Heart right ventricle (tissue), 16 donors: ENCODE measurements at regions of chr18 and their contacts with region 1.

Region 1: GRCh38 chr18:2961821-2962220 is 51.1 kb downstream of the LPIN2 start:
- DNase-seq: no peak
- ATAC-seq: peak; percentile 31 to 77 (median 68)
- H3K4me3 ChIP-seq: no peak overlapping the region
- H3K27ac ChIP-seq: peak overlapping the region in 8 of 10 donors; percentile 14 to 88 (median 52)
- H3K4me1 ChIP-seq: peaks cover 5 to 74% (median 33%) of the 10 kb centered on the region in 9 donors
- H3K27me3 ChIP-seq: no peaks in the 10 kb centered on the region
- CTCF ChIP-seq: no peak

Region 2: DNA sequence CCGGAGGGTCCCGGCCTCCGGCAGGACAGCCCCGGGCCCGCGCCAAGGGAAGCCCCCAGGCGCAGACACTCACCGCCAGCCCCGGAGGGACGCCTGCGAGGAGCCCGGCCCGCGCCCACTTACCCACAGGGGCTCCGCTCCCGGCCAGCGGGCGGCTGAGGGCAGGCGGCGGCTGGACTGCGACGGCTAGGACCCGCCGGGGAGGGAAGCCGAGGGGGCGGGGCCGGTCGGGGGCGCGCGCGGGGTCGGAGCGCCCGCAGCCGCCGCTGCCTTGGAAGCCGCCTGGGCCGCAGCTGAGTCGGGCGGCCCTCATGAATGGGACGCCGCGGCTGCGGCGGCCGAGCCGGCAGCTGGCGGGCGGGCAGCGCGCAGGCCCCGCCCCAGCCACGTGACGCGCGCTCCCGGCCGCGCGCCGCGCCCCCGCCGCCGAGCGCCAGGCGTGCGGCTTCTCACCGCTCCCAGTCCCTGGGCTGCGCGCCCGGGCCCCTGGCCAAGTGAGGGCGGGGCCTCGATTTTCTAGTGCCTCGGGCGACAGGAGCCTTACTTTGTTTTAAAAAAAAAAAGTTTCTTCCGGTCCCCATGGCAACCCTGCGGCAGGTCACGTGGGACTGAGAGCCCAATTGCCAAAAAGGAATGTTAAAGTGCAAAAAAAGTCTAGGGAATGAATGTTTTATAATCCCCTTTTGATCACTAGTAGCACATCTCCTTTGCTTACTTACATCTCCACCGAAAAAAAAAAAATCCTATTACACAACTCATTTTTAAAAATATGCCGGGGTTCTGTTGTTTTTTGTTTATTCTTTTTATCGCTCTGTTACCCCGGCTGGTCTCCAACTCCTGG is 51.4 kb after region 1 on chr18 and contains the start of gene LPIN2:
- intact Hi-C with region 1: loop called in 1 of 10 experiments (anchors 5 kb)
- DNase-seq: peak; percentile 99 to 100
- ATAC-seq: peak; percentile 91 to 94 (median 92)
- H3K4me3 ChIP-seq: peak within 1 kb of the TSS; percentile 50 to 92 (median 88)
- H3K27ac ChIP-seq: peak within 1 kb of the TSS; percentile 57 to 99 (median 95)
- H3K4me1 ChIP-seq: peaks cover 3 to 84% (median 39%) of the 10 kb centered on the region in 9 donors
- H3K27me3 ChIP-seq: no peaks in the 10 kb centered on the region
- CTCF ChIP-seq: no peak
- total RNA-seq, gene LPIN2: 6.8 to 15.9 (median 8.2) TPM

Region 3: DNA sequence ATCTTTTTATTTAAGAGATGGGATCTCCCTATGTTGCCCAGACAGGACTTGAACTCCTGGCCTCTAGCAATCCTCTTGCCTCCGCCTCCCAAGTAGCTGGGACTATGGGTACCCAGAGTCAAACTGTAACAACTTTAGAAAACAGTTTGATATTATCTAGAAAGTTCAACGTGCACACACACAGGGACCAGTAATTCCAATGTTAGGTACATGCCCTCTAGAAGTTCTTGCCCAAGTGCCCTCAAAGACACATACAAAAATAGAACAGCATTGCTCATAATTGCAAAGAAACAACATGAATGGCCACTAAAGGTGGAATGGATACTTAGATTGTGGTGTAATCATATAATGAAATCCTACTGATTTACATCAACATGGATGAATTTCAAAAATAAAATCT is 63.7 kb after region 1 on chr18:
- intact Hi-C with region 1: no loop called
- DNase-seq: no peak
- ATAC-seq: peak in 1 of 8 donors; percentile 55
- H3K4me3 ChIP-seq: no peak overlapping the region
- H3K27ac ChIP-seq: peak overlapping the region in 1 of 10 donors; percentile 20
- H3K4me1 ChIP-seq: peaks cover 0 to 19% (median 12%) of the 10 kb centered on the region in 9 donors
- H3K27me3 ChIP-seq: no peaks in the 10 kb centered on the region
- CTCF ChIP-seq: no peak